ENCODE measurements at regions of chrX and their contacts with region 1.

Region 1: DNA sequence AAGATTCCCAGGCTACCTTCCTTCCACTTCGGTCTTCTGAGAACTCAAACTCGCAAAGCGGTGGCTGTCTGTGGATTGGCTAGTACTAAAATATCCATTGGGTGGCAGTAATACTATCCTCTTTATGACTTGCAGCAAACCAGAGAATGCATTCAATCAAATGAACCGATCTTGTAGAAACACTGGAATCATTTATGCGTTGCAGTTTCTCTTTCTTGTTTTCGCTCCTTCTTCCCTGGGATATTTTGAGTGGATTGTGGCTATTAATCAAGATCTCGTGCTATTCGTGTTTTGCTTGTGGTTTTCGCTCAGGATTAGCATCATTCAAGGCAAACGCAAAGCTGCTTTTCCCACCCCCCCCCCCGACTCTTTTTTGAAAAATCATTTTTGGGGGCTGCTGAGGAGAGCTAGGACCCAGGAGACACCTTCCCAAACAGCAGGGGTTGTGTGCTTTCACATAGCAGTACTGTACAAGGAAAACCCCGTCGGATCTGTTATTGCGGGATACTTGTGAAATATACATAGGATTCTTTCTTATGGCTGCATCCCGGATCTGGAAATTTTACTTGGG is at the start of gene IL1RAPL1:
- DNase-seq: peak; percentile 81
- ATAC-seq: peak; percentile 77
- H3K4me3 ChIP-seq: peak within 1 kb of the TSS; percentile 63
- H3K27ac ChIP-seq: peak within 1 kb of the TSS; percentile 58; the same call in 1 of the 2 replicates
- H3K4me1 ChIP-seq: no peaks in the 10 kb centered on the region
- H3K27me3 ChIP-seq: no peaks in the 10 kb centered on the region
- CTCF ChIP-seq: peak; percentile 39
- POLR2A ChIP-seq: no peak
- RAD21 ChIP-seq: peak; percentile 36
- total RNA-seq, gene IL1RAPL1: 9.0 and 12.5 TPM in 2 replicates

Region 2: DNA sequence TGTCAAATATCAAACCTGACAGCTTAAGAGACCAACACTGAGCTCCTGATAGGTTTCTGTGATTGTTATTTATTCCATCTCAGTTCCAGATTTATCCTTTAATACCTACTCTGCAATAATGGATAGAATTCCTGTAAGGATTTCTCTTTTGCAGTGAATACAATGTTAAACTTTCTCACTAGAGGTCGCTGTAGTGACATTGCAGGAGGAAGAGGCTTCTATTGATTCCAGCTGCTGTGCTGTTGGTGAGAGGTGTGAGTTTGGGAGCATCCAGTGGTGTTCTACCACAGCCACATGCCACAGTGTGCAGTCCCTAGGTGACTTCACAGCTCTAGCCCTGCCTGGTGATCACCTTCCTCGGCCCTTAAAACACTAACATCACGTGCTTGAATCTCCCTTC is 1031.6 kb before region 1 on chrX:
- CTCF ChIA-PET with region 1: no interaction called
- POLR2A ChIA-PET with region 1: no interaction called
- dilution Hi-C with region 1: no loop called
- in situ Hi-C with region 1: no loop called
- intact Hi-C with region 1: loop called (anchors 5 kb)
- DNase-seq: peak; percentile 40
- ATAC-seq: peak; percentile 63
- H3K4me3 ChIP-seq: no peak overlapping the region
- H3K27ac ChIP-seq: no peak overlapping the region
- H3K4me1 ChIP-seq: no peaks in the 10 kb centered on the region
- H3K27me3 ChIP-seq: no peaks in the 10 kb centered on the region
- CTCF ChIP-seq: peak; percentile 45
- POLR2A ChIP-seq: no peak
- RAD21 ChIP-seq: peak; percentile 62

Region 3: DNA sequence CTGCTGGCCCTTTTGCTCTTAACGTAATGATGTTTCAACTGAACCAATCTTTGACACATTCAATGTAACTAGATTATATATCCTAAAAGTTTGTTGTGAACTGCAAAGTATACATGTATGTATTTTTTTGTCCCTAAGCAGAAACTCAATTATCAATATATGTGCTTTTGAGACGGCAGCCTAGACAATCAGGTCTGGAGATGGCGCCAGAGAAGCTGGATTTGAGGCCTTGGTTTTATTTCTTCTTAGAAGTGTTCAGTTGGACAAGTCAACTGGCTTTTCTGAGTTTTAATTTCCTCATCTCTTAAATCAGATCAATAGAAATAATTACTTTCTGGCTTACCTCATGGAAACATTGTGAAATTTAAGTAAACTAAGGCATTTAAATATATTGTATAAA is 668.3 kb before region 1 on chrX:
- CTCF ChIA-PET with region 1: no interaction called
- POLR2A ChIA-PET with region 1: no interaction called
- dilution Hi-C with region 1: no loop called
- in situ Hi-C with region 1: no loop called
- intact Hi-C with region 1: loop called (anchors 5 kb)
- DNase-seq: peak; percentile 4
- ATAC-seq: no peak
- H3K4me3 ChIP-seq: no peak overlapping the region
- H3K27ac ChIP-seq: no peak overlapping the region
- H3K4me1 ChIP-seq: no peaks in the 10 kb centered on the region
- H3K27me3 ChIP-seq: no peaks in the 10 kb centered on the region
- CTCF ChIP-seq: peak; percentile 35
- POLR2A ChIP-seq: no peak
- RAD21 ChIP-seq: peak; percentile 31

Region 4: GRCh38 chrX:28329156-28329555 is 257.9 kb before region 1 on chrX:
- CTCF ChIA-PET with region 1: no interaction called
- POLR2A ChIA-PET with region 1: no interaction called
- dilution Hi-C with region 1: no loop called
- in situ Hi-C with region 1: no loop called
- intact Hi-C with region 1: loop called (anchors 10 kb)
- DNase-seq: peak; percentile 3
- ATAC-seq: no peak
- H3K4me3 ChIP-seq: no peak overlapping the region
- H3K27ac ChIP-seq: no peak overlapping the region
- H3K4me1 ChIP-seq: no peaks in the 10 kb centered on the region; the same call in 1 of the 2 replicates
- H3K27me3 ChIP-seq: no peaks in the 10 kb centered on the region
- CTCF ChIP-seq: no peak
- POLR2A ChIP-seq: no peak
- RAD21 ChIP-seq: no peak

Region 5: DNA sequence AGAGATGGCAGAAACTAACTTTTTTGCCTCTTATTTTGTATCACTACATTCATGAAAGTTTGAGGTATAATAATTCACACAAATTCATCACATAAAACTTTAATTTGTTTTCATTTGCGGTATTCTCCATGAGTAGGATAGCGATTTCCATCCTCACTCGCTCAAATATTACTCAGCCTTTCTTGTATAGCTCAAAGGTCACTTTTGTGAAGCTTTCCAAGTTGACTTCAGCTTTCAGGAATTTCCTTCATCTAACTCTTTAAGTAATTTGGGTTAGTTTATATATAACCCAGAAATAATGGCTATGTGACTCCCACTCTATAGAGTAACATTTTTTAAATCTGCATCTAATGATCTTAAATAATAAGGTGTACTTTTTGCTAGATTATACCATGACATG is 314.6 kb after region 1 on chrX:
- CTCF ChIA-PET with region 1: no interaction called
- POLR2A ChIA-PET with region 1: no interaction called
- dilution Hi-C with region 1: no loop called
- in situ Hi-C with region 1: no loop called
- intact Hi-C with region 1: loop called (anchors 10 kb)
- DNase-seq: peak; percentile 82
- ATAC-seq: peak; percentile 80
- H3K4me3 ChIP-seq: no peak overlapping the region
- H3K27ac ChIP-seq: no peak overlapping the region
- H3K4me1 ChIP-seq: peaks cover 3% of the 10 kb centered on the region
- H3K27me3 ChIP-seq: no peaks in the 10 kb centered on the region
- CTCF ChIP-seq: no peak
- POLR2A ChIP-seq: no peak
- RAD21 ChIP-seq: no peak

Region 6: GRCh38 chrX:29090811-29091210 is 503.7 kb after region 1 on chrX:
- CTCF ChIA-PET with region 1: no interaction called
- POLR2A ChIA-PET with region 1: no interaction called
- dilution Hi-C with region 1: no loop called
- in situ Hi-C with region 1: no loop called
- intact Hi-C with region 1: loop called (anchors 2 kb)
- DNase-seq: peak; percentile 29
- ATAC-seq: no peak
- H3K4me3 ChIP-seq: no peak overlapping the region
- H3K27ac ChIP-seq: no peak overlapping the region
- H3K4me1 ChIP-seq: no peaks in the 10 kb centered on the region
- H3K27me3 ChIP-seq: no peaks in the 10 kb centered on the region
- CTCF ChIP-seq: peak; percentile 45
- POLR2A ChIP-seq: no peak
- RAD21 ChIP-seq: peak; percentile 55

Region 7: DNA sequence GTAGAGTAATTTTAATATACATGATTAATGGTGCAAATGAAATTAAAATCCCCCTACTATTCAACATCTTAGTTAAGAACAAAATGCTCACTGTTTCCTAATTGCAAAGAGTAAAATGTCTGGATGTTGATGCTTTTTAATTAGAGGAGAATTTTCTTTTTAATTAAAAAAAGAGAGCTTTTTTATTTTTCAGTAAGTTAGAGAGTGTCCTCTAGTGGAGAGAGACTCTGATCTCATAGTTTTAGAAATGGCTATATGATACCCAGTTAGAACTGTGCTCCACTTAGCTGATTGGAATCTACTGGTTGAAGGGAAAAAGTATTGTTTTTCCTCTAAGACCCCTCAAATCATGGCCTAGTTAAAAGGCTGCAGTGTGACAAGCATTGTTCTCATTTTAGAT is 1316.3 kb after region 1 on chrX:
- CTCF ChIA-PET with region 1: no interaction called
- POLR2A ChIA-PET with region 1: no interaction called
- dilution Hi-C with region 1: no loop called
- in situ Hi-C with region 1: no loop called
- intact Hi-C with region 1: loop called (anchors 5 kb)
- DNase-seq: peak; percentile 7
- ATAC-seq: peak; percentile 80
- H3K4me3 ChIP-seq: no peak overlapping the region
- H3K27ac ChIP-seq: no peak overlapping the region
- H3K4me1 ChIP-seq: no peaks in the 10 kb centered on the region
- H3K27me3 ChIP-seq: no peaks in the 10 kb centered on the region
- CTCF ChIP-seq: peak; percentile 58
- POLR2A ChIP-seq: no peak
- RAD21 ChIP-seq: peak; percentile 49; the same call in 1 of the 2 replicates